Caco-2 (cell line): ENCODE measurements at regions of chr21 and their contacts with region 1.

Region 1: GRCh38 chr21:38505654-38506515 is 7.6 kb upstream of the ERG start:
- DNase-seq: peak in 1 of 2 experiments; percentile 34
- H3K4me3 ChIP-seq: no peak overlapping the region
- H3K4me3 Mint-ChIP-seq: no peak overlapping the region
- H3K27ac Mint-ChIP-seq: no peak overlapping the region
- H3K4me1 ChIP-seq: no peaks in the 10 kb centered on the region
- H3K4me1 Mint-ChIP-seq: no peaks in the 10 kb centered on the region
- H3K27me3 ChIP-seq: no peaks in the 10 kb centered on the region
- H3K27me3 Mint-ChIP-seq: peaks cover 10% of the 10 kb centered on the region
- CTCF ChIP-seq: peak; percentile 48 to 74

Region 2: DNA sequence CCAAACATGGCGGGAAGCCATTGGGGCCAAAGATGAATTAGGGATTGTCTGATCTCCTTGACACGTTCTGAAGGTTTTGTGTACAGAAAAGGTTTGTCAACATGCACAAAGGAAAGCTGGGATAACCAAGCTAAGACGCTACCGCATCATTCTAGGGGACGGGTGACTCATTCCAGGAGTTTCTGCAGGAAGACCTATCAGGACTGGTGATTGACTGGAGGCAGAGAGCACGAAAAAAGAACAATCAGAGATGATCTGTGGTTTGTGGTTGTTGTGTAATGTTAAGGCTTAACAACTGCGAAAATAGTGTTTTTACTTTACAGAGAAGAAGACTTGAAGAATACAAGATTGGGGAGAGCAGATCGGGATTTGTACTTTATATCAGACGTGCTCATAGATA is 14.6 kb after region 1 on chr21:
- CTCF ChIA-PET with region 1: no interaction called
- POLR2A ChIA-PET with region 1: no interaction called
- intact Hi-C with region 1: no loop called
- DNase-seq: no peak
- H3K4me3 ChIP-seq: no peak overlapping the region
- H3K4me3 Mint-ChIP-seq: no peak overlapping the region
- H3K27ac Mint-ChIP-seq: no peak overlapping the region
- H3K4me1 ChIP-seq: no peaks in the 10 kb centered on the region
- H3K4me1 Mint-ChIP-seq: peaks cover 6% of the 10 kb centered on the region
- H3K27me3 ChIP-seq: no peaks in the 10 kb centered on the region
- H3K27me3 Mint-ChIP-seq: peaks cover 23% of the 10 kb centered on the region
- CTCF ChIP-seq: no peak

Region 3: GRCh38 chr21:38567335-38567969 is 61.6 kb after region 1 on chr21:
- CTCF ChIA-PET with region 1: no interaction called
- POLR2A ChIA-PET with region 1: no interaction called
- intact Hi-C with region 1: no loop called
- DNase-seq: no peak
- H3K4me3 ChIP-seq: no peak overlapping the region
- H3K4me3 Mint-ChIP-seq: no peak overlapping the region
- H3K27ac Mint-ChIP-seq: no peak overlapping the region
- H3K4me1 ChIP-seq: no peaks in the 10 kb centered on the region
- H3K4me1 Mint-ChIP-seq: no peaks in the 10 kb centered on the region
- H3K27me3 ChIP-seq: no peaks in the 10 kb centered on the region
- H3K27me3 Mint-ChIP-seq: peaks cover 9% of the 10 kb centered on the region
- CTCF ChIP-seq: no peak

Region 4: GRCh38 chr21:38712071-38712470 is 206.2 kb after region 1 on chr21:
- CTCF ChIA-PET with region 1: interaction called, 4 read pairs
- POLR2A ChIA-PET with region 1: no interaction called
- intact Hi-C with region 1: loop called (anchors 2 kb)
- DNase-seq: peak; percentile 67 to 69
- H3K4me3 ChIP-seq: no peak overlapping the region
- H3K4me3 Mint-ChIP-seq: no peak overlapping the region
- H3K27ac Mint-ChIP-seq: no peak overlapping the region
- H3K4me1 ChIP-seq: no peaks in the 10 kb centered on the region
- H3K4me1 Mint-ChIP-seq: no peaks in the 10 kb centered on the region
- H3K27me3 ChIP-seq: no peaks in the 10 kb centered on the region
- H3K27me3 Mint-ChIP-seq: no peaks in the 10 kb centered on the region
- CTCF ChIP-seq: peak; percentile 53 to 79

Region 5: GRCh38 chr21:38787461-38788274 is 281.8 kb after region 1 on chr21:
- CTCF ChIA-PET with region 1: no interaction called
- POLR2A ChIA-PET with region 1: no interaction called
- intact Hi-C with region 1: no loop called
- DNase-seq: peak; percentile 80 to 93
- H3K4me3 ChIP-seq: no peak overlapping the region
- H3K4me3 Mint-ChIP-seq: peak overlapping the region; percentile 60
- H3K27ac Mint-ChIP-seq: peak overlapping the region; percentile 92
- H3K4me1 ChIP-seq: peaks cover 43% of the 10 kb centered on the region
- H3K4me1 Mint-ChIP-seq: peaks cover 13% of the 10 kb centered on the region
- H3K27me3 ChIP-seq: no peaks in the 10 kb centered on the region
- H3K27me3 Mint-ChIP-seq: no peaks in the 10 kb centered on the region
- CTCF ChIP-seq: no peak

Region 6: DNA sequence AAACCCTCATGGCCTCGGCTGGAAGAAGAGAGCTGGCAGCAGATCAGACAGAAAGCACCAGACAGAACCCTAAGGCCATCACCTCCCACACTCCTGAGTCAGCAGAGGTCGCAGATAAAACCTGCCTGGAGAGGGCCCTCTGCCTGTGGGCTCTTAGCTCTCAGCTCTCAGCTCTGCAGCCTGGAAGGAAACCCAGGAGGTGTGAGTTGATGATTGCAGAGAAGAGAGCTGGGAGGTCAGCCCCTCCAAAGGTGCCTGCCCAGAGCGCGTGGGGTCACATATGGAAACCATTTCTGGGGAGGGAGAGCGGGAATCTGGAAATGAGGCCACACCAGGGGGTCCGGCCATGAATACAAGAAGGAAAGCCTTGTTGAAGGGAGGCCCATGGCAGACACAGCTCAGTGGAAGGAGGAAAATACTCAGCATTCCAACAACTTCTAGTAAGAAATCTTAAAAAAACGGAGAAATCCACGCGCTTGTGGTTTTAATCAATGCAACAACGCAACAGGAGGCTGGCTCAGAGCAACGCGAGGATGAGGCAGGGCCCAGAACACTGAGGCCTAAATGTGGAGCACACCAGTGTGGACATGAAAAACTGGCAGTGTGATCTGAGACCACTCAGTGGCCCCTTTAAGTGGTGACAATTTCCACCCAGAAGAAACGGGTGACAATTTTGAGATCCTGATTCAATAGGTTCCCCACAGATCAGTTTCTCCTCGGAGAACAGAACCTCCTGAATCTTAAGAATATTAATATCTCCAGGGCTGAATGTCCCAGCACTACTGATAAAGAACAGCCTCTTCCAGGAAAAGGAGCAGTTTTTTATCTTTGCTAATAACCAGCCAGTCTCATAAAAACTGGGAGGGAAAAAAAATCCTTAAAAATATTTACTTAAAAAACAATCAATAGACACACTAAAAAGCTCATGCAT is 631.6 kb after region 1 on chr21:
- CTCF ChIA-PET with region 1: interaction called, 4 read pairs
- POLR2A ChIA-PET with region 1: no interaction called
- intact Hi-C with region 1: loop called (anchors 5 kb)
- DNase-seq: no peak
- H3K4me3 ChIP-seq: no peak overlapping the region
- H3K4me3 Mint-ChIP-seq: no peak overlapping the region
- H3K27ac Mint-ChIP-seq: no peak overlapping the region
- H3K4me1 ChIP-seq: no peaks in the 10 kb centered on the region
- H3K4me1 Mint-ChIP-seq: no peaks in the 10 kb centered on the region
- H3K27me3 ChIP-seq: no peaks in the 10 kb centered on the region
- H3K27me3 Mint-ChIP-seq: no peaks in the 10 kb centered on the region
- CTCF ChIP-seq: no peak